ENCODE measurements at regions of chr17 and their contacts with region 1.

Region 1: DNA sequence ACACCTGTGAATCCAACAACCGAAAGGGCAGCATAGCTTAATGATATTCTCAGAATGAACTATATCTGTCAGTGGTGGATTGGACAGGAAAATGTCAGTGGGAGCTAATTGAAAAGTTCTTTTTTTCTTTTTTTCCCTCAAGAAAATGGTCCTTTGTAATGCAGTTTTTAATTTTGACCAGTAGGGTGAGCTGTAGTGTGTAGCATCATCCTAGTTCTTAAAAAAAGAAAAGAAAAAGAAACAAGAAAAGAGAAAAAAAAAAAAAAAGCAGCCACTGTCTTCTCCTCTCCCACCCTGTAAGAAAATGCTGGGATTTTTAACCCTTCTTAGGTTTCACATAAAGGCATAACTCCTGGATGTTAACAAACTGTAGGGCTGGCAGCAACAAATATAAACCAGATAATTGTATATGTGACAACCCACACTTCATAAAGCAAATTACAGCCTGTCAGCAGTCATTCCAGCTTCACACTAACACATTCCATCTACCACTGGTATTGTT is 78.1 kb downstream of the SKAP1 start:
- DNase-seq: peak; percentile 26
- H3K4me3 ChIP-seq: no peak overlapping the region
- H3K27ac ChIP-seq: no peak overlapping the region
- H3K27me3 ChIP-seq: peaks cover 35% of the 10 kb centered on the region
- CTCF ChIP-seq: peak; percentile 71

Region 2: GRCh38 chr17:48153691-48154358 is 198.1 kb before region 1 on chr17:
- CTCF ChIA-PET with region 1: no interaction called
- POLR2A ChIA-PET with region 1: no interaction called
- DNase-seq: peak; percentile 3
- H3K4me3 ChIP-seq: no peak overlapping the region
- H3K27ac ChIP-seq: no peak overlapping the region
- H3K27me3 ChIP-seq: peaks cover 58% of the 10 kb centered on the region
- CTCF ChIP-seq: peak; percentile 48

Region 3: GRCh38 chr17:48258331-48258730 is 93.6 kb before region 1 on chr17:
- CTCF ChIA-PET with region 1: no interaction called
- POLR2A ChIA-PET with region 1: no interaction called
- DNase-seq: no peak
- H3K4me3 ChIP-seq: no peak overlapping the region
- H3K27ac ChIP-seq: no peak overlapping the region
- H3K27me3 ChIP-seq: peaks cover 42% of the 10 kb centered on the region
- CTCF ChIP-seq: no peak

Region 4: GRCh38 chr17:48330386-48330785 is 21.5 kb before region 1 on chr17:
- CTCF ChIA-PET with region 1: interaction called, 21 read pairs
- POLR2A ChIA-PET with region 1: no interaction called
- DNase-seq: no peak
- H3K4me3 ChIP-seq: no peak overlapping the region
- H3K27ac ChIP-seq: no peak overlapping the region
- H3K27me3 ChIP-seq: peaks cover 35% of the 10 kb centered on the region
- CTCF ChIP-seq: no peak

Region 5: GRCh38 chr17:48363161-48363560 is 11.3 kb after region 1 on chr17:
- CTCF ChIA-PET with region 1: interaction called, 30 read pairs
- POLR2A ChIA-PET with region 1: no interaction called
- DNase-seq: no peak
- H3K4me3 ChIP-seq: no peak overlapping the region
- H3K27ac ChIP-seq: no peak overlapping the region
- H3K27me3 ChIP-seq: peaks cover 42% of the 10 kb centered on the region
- CTCF ChIP-seq: no peak

Region 6: GRCh38 chr17:48541577-48542113 is 189.8 kb after region 1 on chr17:
- CTCF ChIA-PET with region 1: interaction called, 13 read pairs
- POLR2A ChIA-PET with region 1: interaction called, 6 read pairs
- DNase-seq: no peak
- H3K4me3 ChIP-seq: peak overlapping the region; percentile 87
- H3K27ac ChIP-seq: peak overlapping the region; percentile 96
- H3K27me3 ChIP-seq: no peaks in the 10 kb centered on the region
- CTCF ChIP-seq: no peak

Region 7: DNA sequence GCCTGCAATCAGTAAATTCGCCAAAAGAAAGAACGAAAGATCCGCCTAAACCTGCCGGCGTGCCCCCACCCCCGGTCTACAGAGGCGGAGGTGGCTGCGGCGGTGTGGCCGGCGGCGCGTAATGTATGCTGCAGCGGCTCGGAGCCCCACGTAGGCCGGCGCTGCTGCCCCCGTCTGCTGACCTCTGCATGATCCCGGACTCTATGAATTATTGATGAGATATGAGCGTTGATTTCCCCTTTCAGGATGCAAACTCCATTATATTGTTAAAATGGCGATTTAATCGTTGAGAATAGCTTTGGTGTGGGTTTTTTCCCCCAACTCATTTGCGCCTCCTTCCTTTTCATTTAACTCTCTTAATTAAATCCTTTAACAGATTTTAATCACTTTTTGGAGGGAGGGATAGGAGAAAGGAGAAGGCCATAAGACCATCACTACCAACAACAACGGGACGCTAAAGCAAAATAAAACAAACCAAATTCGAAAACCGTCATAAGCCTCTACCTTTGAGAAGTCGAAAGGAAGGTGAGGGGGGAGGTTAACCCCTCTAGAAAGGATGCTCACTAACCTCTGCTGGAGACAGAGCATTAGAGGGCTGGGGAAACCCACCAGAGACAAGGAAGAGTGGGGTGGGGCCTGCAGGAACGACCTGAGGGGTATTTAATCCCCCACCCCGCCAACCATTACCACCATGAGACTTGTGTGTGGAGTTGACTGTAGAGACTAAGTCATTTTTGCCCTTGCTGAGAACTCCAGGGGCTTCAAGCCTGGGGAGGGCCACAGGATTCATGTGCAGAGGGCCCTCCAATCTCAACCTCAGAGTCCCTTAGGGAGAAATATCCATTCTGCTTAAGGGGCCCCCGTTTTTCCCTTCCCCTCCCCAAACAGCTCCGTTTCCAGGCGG is 234.7 kb after region 1 on chr17:
- CTCF ChIA-PET with region 1: interaction called, 15 read pairs
- POLR2A ChIA-PET with region 1: no interaction called
- DNase-seq: no peak
- H3K4me3 ChIP-seq: peak overlapping the region; percentile 89
- H3K27ac ChIP-seq: peak overlapping the region; percentile 97
- H3K27me3 ChIP-seq: no peaks in the 10 kb centered on the region
- CTCF ChIP-seq: no peak

Region 8: DNA sequence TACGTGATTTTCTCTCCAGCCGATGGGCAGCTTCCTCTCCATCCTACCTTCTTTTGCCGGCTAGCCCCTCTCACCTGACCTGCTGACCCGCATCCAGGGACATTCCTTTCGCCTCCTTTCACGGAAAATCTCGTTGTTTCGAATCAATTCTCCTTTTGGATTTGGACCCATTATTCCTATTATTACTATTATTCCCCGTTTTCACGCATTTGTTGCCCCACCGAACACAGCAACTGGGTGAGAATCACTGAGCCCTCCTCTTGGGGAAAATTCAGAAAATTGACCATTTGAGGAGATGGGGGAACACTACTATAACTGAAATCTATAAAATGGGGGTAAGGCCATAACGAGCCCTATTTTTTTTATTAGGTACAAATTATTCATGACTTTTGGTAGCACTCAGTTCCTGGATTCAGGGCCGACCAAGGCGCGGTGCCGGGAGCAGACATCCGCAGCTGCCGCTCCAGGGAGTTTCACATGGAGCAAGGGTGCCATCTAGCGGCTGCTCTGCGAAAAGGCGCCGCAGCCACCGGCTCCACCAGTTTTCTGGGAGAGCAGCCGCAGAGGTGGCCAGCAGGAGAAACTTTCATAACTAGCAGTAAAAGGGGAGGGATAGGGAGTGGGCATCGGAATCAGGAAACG is 266.5 kb after region 1 on chr17:
- CTCF ChIA-PET with region 1: interaction called, 24 read pairs
- POLR2A ChIA-PET with region 1: no interaction called
- DNase-seq: no peak
- H3K4me3 ChIP-seq: no peak overlapping the region
- H3K27ac ChIP-seq: no peak overlapping the region
- H3K27me3 ChIP-seq: peaks cover 96% of the 10 kb centered on the region
- CTCF ChIP-seq: peak; percentile 96